CD4-positive, alpha-beta T cell (primary cell): ENCODE measurements at regions of chr12 and their contacts with region 1.

Region 1: DNA sequence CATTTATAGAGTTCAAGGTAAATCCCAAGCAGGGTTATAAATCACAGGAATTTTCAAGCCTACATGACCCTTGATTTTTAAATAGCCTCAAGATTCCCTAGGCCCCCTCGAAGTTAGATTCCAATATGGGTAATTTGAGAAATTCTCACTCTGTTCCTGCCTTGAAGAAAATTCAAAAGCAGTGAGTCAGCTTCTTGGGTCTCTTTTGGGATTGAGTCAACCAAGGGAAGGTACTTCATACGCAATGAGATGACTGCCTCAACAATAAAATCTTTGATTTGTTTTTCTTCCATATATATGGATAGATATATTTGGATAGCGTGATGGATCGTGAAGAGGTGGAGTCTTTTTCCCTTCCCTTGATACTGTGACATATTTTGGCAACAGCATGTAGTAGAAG is 180.4 kb upstream of the ATP2B1 start:
- DNase-seq: no peak
- ATAC-seq: no peak
- H3K4me3 ChIP-seq: no peak overlapping the region
- H3K4me3 Mint-ChIP-seq: no peak overlapping the region
- H3K27ac ChIP-seq: no peak overlapping the region
- H3K27ac Mint-ChIP-seq: no peak overlapping the region
- H3K4me1 ChIP-seq: no peaks in the 10 kb centered on the region
- H3K4me1 Mint-ChIP-seq: peaks cover 26% of the 10 kb centered on the region
- H3K27me3 ChIP-seq: no peaks in the 10 kb centered on the region
- H3K27me3 Mint-ChIP-seq: no peaks in the 10 kb centered on the region
- CTCF ChIP-seq: no peak

Region 2: DNA sequence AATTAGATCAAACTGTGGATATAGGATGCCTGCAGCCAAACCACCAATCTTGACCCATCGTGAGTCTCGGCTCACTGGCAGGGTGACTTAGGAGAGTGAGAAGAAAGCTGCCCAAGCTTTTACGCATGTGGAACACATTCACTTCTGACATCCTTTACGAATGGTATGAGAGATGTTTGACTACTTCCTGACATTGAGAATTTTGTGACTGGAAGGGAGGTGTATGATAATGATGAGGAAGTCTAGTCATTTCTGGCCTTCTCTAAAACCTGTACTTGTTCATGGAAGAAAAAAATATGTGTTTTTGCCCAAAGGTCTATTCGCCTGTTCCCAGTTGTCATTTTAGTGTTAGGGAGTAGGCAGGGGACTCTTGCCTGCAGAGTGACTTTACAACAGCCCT is 46.8 kb after region 1 on chr12:
- CTCF ChIA-PET with region 1: no interaction called
- POLR2A ChIA-PET with region 1: no interaction called
- intact Hi-C with region 1: loop called in 1 of 2 experiments (anchors 5 kb)
- DNase-seq: no peak
- ATAC-seq: no peak
- H3K4me3 ChIP-seq: no peak overlapping the region
- H3K4me3 Mint-ChIP-seq: no peak overlapping the region
- H3K27ac ChIP-seq: no peak overlapping the region
- H3K27ac Mint-ChIP-seq: no peak overlapping the region
- H3K4me1 ChIP-seq: peaks cover 3% of the 10 kb centered on the region
- H3K4me1 Mint-ChIP-seq: peaks cover 30% of the 10 kb centered on the region
- H3K27me3 ChIP-seq: no peaks in the 10 kb centered on the region
- H3K27me3 Mint-ChIP-seq: no peaks in the 10 kb centered on the region
- CTCF ChIP-seq: no peak

Region 3: DNA sequence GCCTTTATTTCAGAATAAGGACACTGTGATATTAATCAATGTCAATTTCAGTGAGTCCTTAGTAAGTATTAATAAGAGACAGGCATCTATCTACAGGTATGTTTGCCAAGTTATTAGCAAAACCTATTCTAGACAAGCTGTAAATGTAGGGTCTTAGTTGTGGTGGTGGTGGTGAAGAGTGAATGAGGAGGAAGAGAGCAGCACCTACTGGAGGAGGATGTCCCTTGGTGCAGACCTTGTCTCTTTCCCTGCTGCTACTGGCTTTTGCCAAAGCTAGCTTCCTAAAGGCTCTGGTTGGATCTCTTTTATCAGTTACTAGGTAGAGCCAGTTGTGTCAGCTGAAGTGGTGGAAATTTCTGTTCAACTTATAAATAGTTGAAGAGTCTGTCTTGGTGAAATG is 124.4 kb after region 1 on chr12:
- CTCF ChIA-PET with region 1: no interaction called
- POLR2A ChIA-PET with region 1: no interaction called
- intact Hi-C with region 1: no loop called
- DNase-seq: peak in 4 of 14 experiments; percentile 12 to 58 (median 44)
- ATAC-seq: peak; percentile 46
- H3K4me3 ChIP-seq: no peak overlapping the region
- H3K4me3 Mint-ChIP-seq: no peak overlapping the region
- H3K27ac ChIP-seq: no peak overlapping the region
- H3K27ac Mint-ChIP-seq: no peak overlapping the region
- H3K4me1 ChIP-seq: no peaks in the 10 kb centered on the region
- H3K4me1 Mint-ChIP-seq: peaks cover 9% of the 10 kb centered on the region
- H3K27me3 ChIP-seq: no peaks in the 10 kb centered on the region
- H3K27me3 Mint-ChIP-seq: no peaks in the 10 kb centered on the region
- CTCF ChIP-seq: peak; percentile 24